ENCODE measurements at regions of chr12 and their contacts with region 1.

Region 1: DNA sequence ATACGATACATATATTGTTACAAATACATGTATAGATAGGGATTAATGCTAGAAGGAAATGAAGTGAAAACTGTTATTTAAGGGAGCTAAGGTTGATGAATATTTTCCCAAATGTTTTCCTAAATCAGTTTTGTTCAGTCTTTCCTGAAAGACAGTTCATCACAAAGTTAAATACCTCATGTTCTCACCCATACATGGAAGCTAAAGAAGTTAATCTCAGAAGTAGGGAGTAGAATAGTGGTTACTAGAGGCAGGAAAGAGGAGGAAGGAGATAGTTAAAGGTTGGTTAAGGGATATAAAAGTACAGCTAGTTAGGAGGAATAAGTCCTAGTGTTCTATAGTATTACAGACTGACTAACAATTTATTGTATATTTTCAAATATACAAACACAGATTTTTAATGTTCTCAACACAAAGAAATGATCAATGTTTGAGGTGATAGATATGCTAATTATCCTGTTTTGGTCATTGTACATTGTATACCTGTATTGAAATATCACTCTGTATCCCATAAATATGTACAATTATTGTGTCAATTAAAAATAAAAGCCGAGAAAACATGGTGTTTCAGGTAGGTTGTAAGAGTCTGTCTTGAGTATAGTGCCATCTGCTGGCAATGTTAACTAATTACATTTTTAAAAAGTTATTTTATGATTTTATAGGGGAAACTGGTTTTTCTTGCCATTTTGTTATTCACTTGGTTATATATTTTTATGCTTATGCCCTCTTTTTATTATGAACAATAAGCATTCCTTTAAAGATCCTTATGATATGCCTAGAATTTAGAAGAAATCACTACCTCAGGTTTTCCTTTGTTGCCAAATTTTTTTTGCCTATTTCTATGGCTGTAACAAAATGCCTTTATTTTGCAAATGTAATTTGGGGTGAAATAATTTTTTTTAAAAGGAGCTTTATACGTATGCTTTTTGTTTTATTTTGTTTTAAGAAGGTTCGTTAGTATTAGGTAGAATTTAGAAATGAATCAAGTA is 26.9 kb downstream of the ZDHHC17 start:
- DNase-seq: no peak
- H3K4me3 ChIP-seq: no peak overlapping the region
- H3K27ac ChIP-seq: no peak overlapping the region
- H3K4me1 ChIP-seq: peaks cover 7 to 65% (median 19%) of the 10 kb centered on the region in 6 donors
- H3K27me3 ChIP-seq: no peaks in the 10 kb centered on the region
- CTCF ChIP-seq: peak in 10 of 11 experiments; percentile 12 to 66 (median 56)
- POLR2A ChIP-seq: no peak

Region 2: GRCh38 chr12:76621582-76622024 is 169.3 kb before region 1 on chr12:
- intact Hi-C with region 1: loop called (anchors 2 kb)
- DNase-seq: no peak
- H3K4me3 ChIP-seq: no peak overlapping the region
- H3K27ac ChIP-seq: no peak overlapping the region
- H3K4me1 ChIP-seq: peaks cover 0 to 13% (median 6%) of the 10 kb centered on the region in 6 donors
- H3K27me3 ChIP-seq: no peaks in the 10 kb centered on the region
- CTCF ChIP-seq: peak; percentile 83 to 96 (median 93)
- POLR2A ChIP-seq: no peak